A673 (cell line): ENCODE measurements at regions of chr10 and their contacts with region 1.

Region 1: DNA sequence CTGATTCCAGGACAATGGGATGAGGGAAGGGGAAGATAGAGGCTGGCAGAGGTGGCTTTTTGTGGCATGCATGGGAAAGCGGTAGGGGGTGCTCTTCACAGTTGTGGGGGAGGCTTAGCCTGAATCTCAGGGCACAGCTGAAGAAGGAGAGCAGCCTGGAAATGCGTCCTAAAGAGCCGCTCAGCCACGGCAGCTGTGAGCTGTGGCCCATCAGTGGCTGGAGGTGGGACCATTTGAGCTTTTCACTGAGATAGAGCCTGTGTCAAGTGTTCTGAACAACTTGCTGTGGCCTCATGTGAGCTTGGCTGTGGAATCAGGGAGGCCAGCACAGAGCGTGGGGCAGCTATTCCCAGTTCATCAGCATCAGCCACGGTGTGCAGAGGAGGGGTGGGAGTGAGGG is 100.3 kb upstream of the INSYN2A start:
- DNase-seq: no peak
- H3K4me3 ChIP-seq: no peak overlapping the region
- H3K27ac ChIP-seq: no peak overlapping the region
- H3K4me1 ChIP-seq: no peaks in the 10 kb centered on the region
- H3K27me3 ChIP-seq: no peaks in the 10 kb centered on the region
- CTCF ChIP-seq: no peak

Region 2: GRCh38 chr10:127168261-127168660 is 128.4 kb before region 1 on chr10:
- CTCF ChIA-PET with region 1: no interaction called
- POLR2A ChIA-PET with region 1: interaction called, 15 read pairs
- intact Hi-C with region 1: no loop called
- DNase-seq: no peak
- H3K4me3 ChIP-seq: no peak overlapping the region
- H3K27ac ChIP-seq: no peak overlapping the region
- H3K4me1 ChIP-seq: no peaks in the 10 kb centered on the region
- H3K27me3 ChIP-seq: no peaks in the 10 kb centered on the region
- CTCF ChIP-seq: no peak

Region 3: DNA sequence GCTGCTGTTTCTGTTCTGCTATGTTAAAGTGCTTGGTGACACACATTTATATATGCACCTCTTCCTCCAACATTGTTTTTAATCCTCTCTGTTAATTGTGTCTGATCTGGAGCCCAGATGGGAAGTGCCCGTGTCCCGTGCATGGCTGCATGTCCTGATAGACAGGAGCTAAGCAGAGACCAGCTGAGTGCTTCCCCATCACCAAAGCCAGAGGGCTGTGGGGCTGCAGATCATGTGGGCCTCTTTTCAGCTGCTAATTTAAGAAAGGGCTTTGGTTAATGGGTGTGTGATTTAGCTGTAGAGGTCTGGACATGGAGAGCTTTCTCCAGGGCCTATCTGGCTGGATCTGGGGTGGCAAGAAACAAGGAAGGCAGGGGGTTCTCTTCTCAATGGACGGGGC is 155.9 kb after region 1 on chr10:
- CTCF ChIA-PET with region 1: no interaction called
- POLR2A ChIA-PET with region 1: no interaction called
- intact Hi-C with region 1: no loop called
- DNase-seq: no peak
- H3K4me3 ChIP-seq: no peak overlapping the region
- H3K27ac ChIP-seq: no peak overlapping the region
- H3K4me1 ChIP-seq: no peaks in the 10 kb centered on the region
- H3K27me3 ChIP-seq: no peaks in the 10 kb centered on the region
- CTCF ChIP-seq: no peak